ENCODE measurements at regions of chr10 and their contacts with region 1.

Region 1: DNA sequence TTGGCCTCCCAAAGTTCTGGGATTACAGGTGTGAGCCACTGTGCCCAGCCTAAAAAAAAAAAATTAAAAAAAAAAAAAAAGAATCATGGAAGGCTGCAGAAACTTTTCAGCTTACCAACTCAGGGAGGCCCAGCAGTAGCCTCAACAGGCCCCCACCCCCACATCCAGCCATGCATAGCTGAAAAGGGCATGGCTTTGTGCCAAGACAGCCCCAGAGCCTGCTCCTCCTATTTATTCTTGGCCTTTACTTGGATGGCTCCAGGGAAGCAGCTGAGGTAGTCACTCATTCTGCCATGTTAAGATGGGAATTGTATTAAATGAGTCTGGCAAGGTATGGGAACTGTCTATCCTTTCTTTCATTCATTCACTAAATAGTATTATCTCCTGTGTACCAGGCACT is 13.7 kb upstream of the CNNM2 start:
- DNase-seq: no peak
- ATAC-seq: no peak
- H3K4me3 ChIP-seq: no peak overlapping the region
- H3K4me3 Mint-ChIP-seq: no peak overlapping the region
- H3K27ac ChIP-seq: no peak overlapping the region
- H3K27ac Mint-ChIP-seq: no peak overlapping the region
- H3K4me1 ChIP-seq: no peaks in the 10 kb centered on the region
- H3K4me1 Mint-ChIP-seq: no peaks in the 10 kb centered on the region
- H3K27me3 ChIP-seq: no peaks in the 10 kb centered on the region
- H3K27me3 Mint-ChIP-seq: no peaks in the 10 kb centered on the region
- CTCF ChIP-seq: no peak

Region 2: DNA sequence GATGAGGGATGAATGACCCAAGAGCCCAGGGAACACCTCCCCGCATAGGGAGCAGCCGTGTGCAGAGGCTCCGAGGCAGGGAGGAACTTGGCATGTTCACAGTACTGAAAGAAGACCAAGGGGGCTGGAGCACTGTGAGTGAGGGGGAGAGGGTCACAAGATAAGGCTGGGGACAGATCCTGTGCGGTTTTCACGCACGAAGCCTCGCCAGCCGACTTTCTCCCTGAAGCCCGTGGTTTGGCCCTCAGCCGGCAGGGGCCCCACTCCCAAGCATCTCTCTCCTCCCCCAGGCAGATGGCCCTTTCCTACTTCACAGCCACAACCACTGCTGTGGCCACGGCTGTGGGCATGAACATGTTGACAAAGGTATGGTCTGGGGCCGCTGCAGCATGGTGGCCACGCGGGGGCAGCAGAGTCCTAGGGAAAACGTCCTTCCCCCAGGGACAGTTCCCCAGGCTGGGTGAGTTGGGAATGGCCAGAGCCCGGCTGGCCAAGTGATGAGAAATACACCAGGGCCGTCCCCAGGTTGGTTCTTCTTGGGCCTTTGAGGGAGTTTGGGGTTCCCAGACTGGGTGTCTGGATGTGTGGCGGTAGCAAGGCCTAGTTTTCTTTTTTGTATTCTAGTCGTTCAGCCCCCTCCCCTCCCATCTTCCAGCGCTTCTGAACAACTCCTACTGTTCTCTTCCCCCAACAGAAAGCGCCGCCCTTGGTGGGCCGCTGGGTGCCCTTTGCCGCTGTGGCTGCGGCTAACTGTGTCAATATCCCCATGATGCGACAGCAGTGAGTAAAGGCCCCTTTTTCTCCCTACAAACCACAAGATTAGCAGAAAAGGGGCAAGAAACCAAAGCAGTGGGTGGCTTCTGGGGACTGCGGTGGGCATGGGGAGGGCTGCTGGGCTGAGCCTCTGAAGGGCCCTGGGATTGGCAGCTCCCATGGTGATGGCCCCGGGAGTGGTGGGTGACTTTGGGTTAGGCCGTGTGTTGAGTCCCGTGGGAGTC is 175.0 kb before region 1 on chr10:
- CTCF ChIA-PET with region 1: interaction called, 14 read pairs
- POLR2A ChIA-PET with region 1: no interaction called
- intact Hi-C with region 1: no loop called
- DNase-seq: peak; percentile 63
- ATAC-seq: peak; percentile 78
- H3K4me3 ChIP-seq: no peak overlapping the region
- H3K4me3 Mint-ChIP-seq: no peak overlapping the region
- H3K27ac ChIP-seq: no peak overlapping the region
- H3K27ac Mint-ChIP-seq: no peak overlapping the region
- H3K4me1 ChIP-seq: no peaks in the 10 kb centered on the region
- H3K4me1 Mint-ChIP-seq: no peaks in the 10 kb centered on the region
- H3K27me3 ChIP-seq: no peaks in the 10 kb centered on the region
- H3K27me3 Mint-ChIP-seq: no peaks in the 10 kb centered on the region
- CTCF ChIP-seq: peak; percentile 69

Region 3: GRCh38 chr10:102853944-102854694 is 50.2 kb before region 1 on chr10 and contains the start of gene BORCS7:
- CTCF ChIA-PET with region 1: no interaction called
- POLR2A ChIA-PET with region 1: no interaction called
- intact Hi-C with region 1: no loop called
- DNase-seq: peak; percentile 93
- ATAC-seq: peak; percentile 99
- H3K4me3 ChIP-seq: peak within 1 kb of the TSS; percentile 86 to 99 (median 98)
- H3K4me3 Mint-ChIP-seq: peak within 1 kb of the TSS; percentile 83
- H3K27ac ChIP-seq: peak within 1 kb of the TSS; percentile 84 to 91
- H3K27ac Mint-ChIP-seq: peak within 1 kb of the TSS; percentile 97
- H3K4me1 ChIP-seq: peaks cover 0 to 8% of the 10 kb centered on the region in 2 donors
- H3K4me1 Mint-ChIP-seq: peaks cover 12% of the 10 kb centered on the region
- H3K27me3 ChIP-seq: no peaks in the 10 kb centered on the region
- H3K27me3 Mint-ChIP-seq: no peaks in the 10 kb centered on the region
- CTCF ChIP-seq: no peak
- total RNA-seq, gene BORCS7: 20.8 and 21.8 TPM in 2 replicates

Region 4: DNA sequence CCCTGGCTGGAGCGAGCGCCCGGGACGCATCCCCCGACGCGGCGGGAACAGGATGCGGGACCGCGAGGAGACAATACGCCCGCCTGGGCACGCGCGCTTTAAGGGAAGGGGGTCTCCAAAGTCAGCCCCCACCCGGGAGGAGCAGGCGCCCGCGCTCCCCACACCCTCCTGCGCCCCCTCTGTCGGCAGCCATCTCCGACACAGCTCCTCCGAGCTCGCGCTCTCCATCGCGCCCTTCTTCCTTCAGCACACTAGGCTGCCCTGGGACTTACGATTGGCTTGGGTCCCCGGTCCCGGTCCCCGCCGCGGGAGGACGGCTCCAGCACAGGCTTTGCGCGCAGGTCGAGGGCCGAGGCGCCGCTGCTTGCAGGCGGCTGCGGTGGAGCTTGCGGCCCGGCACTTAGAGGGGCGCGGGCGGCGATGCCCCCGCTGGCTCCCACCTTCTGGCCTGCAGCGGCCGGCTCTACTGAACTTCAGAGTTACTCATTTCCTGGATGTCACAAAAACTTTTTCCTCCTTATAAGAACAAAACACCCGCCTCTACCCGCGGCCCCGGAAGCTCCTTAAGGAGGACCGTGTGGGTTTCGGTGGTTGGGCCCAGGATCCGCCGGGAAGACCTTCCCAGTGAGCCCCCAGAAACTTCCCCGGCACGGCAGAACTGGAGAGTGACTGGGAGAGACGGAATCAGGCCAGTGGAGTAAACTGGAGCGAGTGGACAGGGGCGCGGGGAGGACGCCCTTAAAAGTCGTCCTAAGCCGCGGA is 1433.8 kb after region 1 on chr10 and contains the start of gene ITPRIP:
- CTCF ChIA-PET with region 1: no interaction called
- POLR2A ChIA-PET with region 1: no interaction called
- intact Hi-C with region 1: no loop called
- DNase-seq: peak; percentile 87
- ATAC-seq: peak; percentile 75
- H3K4me3 ChIP-seq: peak within 1 kb of the TSS; percentile 94 to 98 (median 97)
- H3K4me3 Mint-ChIP-seq: peak within 1 kb of the TSS; percentile 100
- H3K27ac ChIP-seq: peak within 1 kb of the TSS; percentile 80 to 83
- H3K27ac Mint-ChIP-seq: peak within 1 kb of the TSS; percentile 100
- H3K4me1 ChIP-seq: peaks cover 34 to 54% of the 10 kb centered on the region in 2 donors
- H3K4me1 Mint-ChIP-seq: peaks cover 53% of the 10 kb centered on the region
- H3K27me3 ChIP-seq: no peaks in the 10 kb centered on the region
- H3K27me3 Mint-ChIP-seq: no peaks in the 10 kb centered on the region
- CTCF ChIP-seq: no peak
- total RNA-seq, gene ITPRIP: 21.3 and 22.5 TPM in 2 replicates